Activated B cell treated with CpG ODN at 0.5 μM for 24 hours (primary cell): ENCODE measurements at regions of chr9 and their contacts with region 1.

Region 1: GRCh38 chr9:128117613-128118471 is 9.7 kb downstream of the PTGES2 start:
- DNase-seq: peak; percentile 98
- ATAC-seq: peak; percentile 48
- H3K4me3 Mint-ChIP-seq: no peak overlapping the region
- H3K27ac Mint-ChIP-seq: peak overlapping the region; percentile 56
- H3K4me1 Mint-ChIP-seq: peaks cover 42% of the 10 kb centered on the region
- H3K27me3 Mint-ChIP-seq: no peaks in the 10 kb centered on the region
- CTCF ChIP-seq: peak; percentile 99

Region 2: DNA sequence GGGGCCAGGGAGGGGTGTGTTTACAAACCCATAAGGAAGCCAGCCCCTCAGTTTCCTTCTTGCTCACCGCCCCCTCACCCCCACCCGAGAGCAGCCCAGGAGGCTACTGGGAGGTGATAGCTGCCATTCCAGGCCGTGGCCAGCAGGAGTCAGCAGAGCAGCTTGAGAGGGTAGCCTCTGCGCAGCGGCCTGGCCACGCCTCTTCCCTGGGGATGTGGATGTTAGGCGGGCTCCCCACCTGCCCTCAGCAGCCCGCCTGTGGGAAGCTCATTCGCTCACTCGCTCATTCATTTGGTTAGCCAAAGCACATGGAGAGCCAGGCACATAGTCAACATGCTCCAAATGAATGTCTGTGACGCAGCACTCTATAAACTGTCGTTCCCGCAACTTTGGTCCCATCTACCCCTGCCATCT is 174.1 kb before region 1 on chr9:
- CTCF ChIA-PET with region 1: interaction called, 39 read pairs
- POLR2A ChIA-PET with region 1: no interaction called
- intact Hi-C with region 1: loop called (anchors 1 kb)
- DNase-seq: peak; percentile 71
- ATAC-seq: peak; percentile 93
- H3K4me3 Mint-ChIP-seq: no peak overlapping the region
- H3K27ac Mint-ChIP-seq: peak overlapping the region; percentile 73
- H3K4me1 Mint-ChIP-seq: peaks cover 21% of the 10 kb centered on the region
- H3K27me3 Mint-ChIP-seq: no peaks in the 10 kb centered on the region
- CTCF ChIP-seq: no peak

Region 3: DNA sequence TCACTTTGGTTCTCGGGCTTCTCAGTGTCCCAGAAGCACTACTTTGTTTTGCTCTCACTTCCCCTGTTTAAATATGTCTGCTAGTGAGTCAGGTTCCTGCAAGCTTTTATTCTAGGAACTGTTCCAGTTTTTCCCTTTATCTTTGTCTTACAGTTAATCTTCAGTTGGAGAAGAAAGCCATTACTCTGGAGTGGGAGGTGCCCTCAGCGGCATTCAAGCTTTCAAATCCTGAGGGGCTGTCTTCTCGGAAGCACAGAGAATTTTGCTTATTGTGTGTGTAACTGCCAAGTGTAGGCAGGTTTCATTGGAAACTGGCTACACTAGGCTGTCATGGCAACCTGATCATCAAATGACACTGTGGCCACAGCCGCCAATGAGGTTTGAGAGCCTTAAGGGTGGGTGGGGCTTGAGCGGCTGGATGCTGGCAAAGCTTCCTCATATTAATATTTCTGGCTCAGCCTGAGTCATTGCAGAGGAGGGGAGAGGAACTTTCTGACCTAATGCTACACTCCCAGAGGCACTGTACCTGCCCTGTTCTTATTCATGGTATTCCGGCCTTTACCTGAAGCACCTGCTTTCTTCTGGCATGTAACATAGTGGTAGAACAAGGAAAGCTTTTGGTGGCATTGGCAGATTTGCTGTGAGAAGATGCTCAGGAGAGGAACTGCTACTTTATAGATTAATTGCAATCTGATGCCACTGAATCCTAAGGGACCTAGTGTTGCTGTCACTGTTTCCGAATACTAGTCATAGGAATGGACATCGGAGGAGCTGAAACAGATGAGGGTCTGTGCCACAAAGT is 23.5 kb before region 1 on chr9:
- CTCF ChIA-PET with region 1: interaction called, 6 read pairs
- POLR2A ChIA-PET with region 1: interaction called, 6 read pairs
- intact Hi-C with region 1: loop called (anchors 1 kb)
- DNase-seq: peak; percentile 67
- ATAC-seq: peak; percentile 92
- H3K4me3 Mint-ChIP-seq: peak overlapping the region; percentile 71
- H3K27ac Mint-ChIP-seq: peak overlapping the region; percentile 99
- H3K4me1 Mint-ChIP-seq: peaks cover 42% of the 10 kb centered on the region
- H3K27me3 Mint-ChIP-seq: no peaks in the 10 kb centered on the region
- CTCF ChIP-seq: no peak